Endothelial cell of umbilical vein (primary cell): ENCODE measurements at regions of chr12 and their contacts with region 1.

Region 1: DNA sequence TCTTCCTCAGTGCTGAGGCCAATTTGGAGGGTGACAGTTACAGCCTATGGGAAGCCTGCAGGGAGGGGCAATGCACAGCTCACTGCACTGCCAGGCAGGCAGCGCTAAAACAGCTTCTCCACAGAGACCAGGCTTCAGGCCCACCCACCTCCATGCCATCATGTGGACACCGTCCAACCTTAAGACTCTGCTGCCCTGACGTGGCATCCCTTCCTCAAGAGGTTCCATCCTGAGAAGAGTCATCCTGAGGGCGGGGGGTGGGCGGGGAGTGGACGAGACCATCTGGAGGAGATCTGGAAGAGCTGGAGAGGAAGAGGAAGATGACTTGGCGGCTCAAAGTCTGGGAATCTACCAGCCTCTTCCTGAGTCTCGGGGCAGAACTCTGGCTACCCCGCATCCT is 8.4 kb upstream of the ACVRL1 start:
- DNase-seq: peak; percentile 92
- H3K4me3 ChIP-seq: no peak overlapping the region
- H3K27ac ChIP-seq: peak overlapping the region; percentile 95
- H3K4me1 ChIP-seq: peaks cover 67% of the 10 kb centered on the region
- H3K27me3 ChIP-seq: no peaks in the 10 kb centered on the region
- CTCF ChIP-seq: no peak
- POLR2A ChIP-seq: peak; percentile 12

Region 2: DNA sequence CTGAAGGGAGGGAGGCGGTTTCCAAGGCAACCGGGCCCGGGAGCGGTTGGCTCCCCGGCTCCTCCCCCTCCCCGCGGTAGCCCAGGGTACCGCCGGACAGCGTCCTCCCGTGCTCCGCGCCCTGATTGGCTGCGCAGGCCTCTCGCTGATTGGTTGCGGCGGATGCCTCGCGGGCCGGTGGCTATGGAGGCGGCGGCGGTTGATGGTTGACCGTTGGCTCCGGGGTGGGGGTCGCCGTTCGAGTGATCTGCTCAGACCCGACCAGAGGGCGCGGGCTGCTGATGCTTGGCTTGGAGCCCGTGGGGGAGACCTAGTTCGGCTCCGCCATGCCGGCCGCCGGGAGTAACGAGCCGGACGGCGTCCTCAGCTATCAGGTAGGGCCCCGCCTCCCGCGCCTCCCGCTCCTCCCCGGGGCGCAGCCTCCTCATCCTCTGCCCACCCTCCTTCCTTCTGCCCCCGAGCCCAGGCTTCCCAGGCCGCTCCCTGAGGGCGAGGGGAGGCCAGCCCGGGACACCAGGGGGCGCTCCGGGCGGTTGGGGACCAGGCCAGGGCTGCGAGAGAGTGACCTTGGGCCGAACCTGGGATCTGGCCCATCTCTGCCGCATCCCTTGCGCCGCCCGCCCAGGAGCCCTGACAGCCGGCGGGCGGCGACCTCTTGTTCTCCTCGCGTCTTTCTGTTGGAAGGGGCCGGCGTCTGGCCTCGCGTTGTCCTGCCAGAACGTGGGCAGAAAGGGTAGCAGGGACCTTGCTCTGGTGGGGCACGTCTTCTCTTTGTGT is 474.1 kb before region 1 on chr12 and contains the start of gene SLC4A8:
- CTCF ChIA-PET with region 1: no interaction called
- POLR2A ChIA-PET with region 1: no interaction called
- dilution Hi-C with region 1: no loop called
- intact Hi-C with region 1: no loop called
- DNase-seq: peak; percentile 78
- H3K4me3 ChIP-seq: peak within 1 kb of the TSS; percentile 21 to 59 (median 33)
- H3K27ac ChIP-seq: no peak within 1 kb of the TSS
- H3K4me1 ChIP-seq: peaks cover 7% of the 10 kb centered on the region
- H3K27me3 ChIP-seq: no peaks in the 10 kb centered on the region
- CTCF ChIP-seq: peak; percentile 86 to 91
- POLR2A ChIP-seq: peak; percentile 37
- total RNA-seq, gene SLC4A8: 7.1 and 9.7 TPM in 2 replicates

Region 3: GRCh38 chr12:51886021-51886322 is 13.0 kb before region 1 on chr12:
- CTCF ChIA-PET with region 1: interaction called, 10 read pairs
- POLR2A ChIA-PET with region 1: interaction called, 5 read pairs
- dilution Hi-C with region 1: no loop called
- intact Hi-C with region 1: no loop called
- DNase-seq: peak; percentile 98
- H3K4me3 ChIP-seq: peak overlapping the region in 1 of 3 experiments; percentile 7
- H3K27ac ChIP-seq: peak overlapping the region; percentile 89
- H3K4me1 ChIP-seq: peaks cover 41% of the 10 kb centered on the region
- H3K27me3 ChIP-seq: no peaks in the 10 kb centered on the region
- CTCF ChIP-seq: no peak
- POLR2A ChIP-seq: peak; percentile 76

Region 4: GRCh38 chr12:51911788-51912711 is 13.1 kb after region 1 on chr12:
- CTCF ChIA-PET with region 1: interaction called, 393 read pairs
- POLR2A ChIA-PET with region 1: interaction called, 18 read pairs
- dilution Hi-C with region 1: no loop called
- intact Hi-C with region 1: loop called (anchors 1 kb)
- DNase-seq: peak; percentile 86
- H3K4me3 ChIP-seq: peak overlapping the region; percentile 5 to 57 (median 44)
- H3K27ac ChIP-seq: peak overlapping the region; percentile 99
- H3K4me1 ChIP-seq: peaks cover 59% of the 10 kb centered on the region
- H3K27me3 ChIP-seq: no peaks in the 10 kb centered on the region
- CTCF ChIP-seq: no peak
- POLR2A ChIP-seq: peak; percentile 10

Region 5: DNA sequence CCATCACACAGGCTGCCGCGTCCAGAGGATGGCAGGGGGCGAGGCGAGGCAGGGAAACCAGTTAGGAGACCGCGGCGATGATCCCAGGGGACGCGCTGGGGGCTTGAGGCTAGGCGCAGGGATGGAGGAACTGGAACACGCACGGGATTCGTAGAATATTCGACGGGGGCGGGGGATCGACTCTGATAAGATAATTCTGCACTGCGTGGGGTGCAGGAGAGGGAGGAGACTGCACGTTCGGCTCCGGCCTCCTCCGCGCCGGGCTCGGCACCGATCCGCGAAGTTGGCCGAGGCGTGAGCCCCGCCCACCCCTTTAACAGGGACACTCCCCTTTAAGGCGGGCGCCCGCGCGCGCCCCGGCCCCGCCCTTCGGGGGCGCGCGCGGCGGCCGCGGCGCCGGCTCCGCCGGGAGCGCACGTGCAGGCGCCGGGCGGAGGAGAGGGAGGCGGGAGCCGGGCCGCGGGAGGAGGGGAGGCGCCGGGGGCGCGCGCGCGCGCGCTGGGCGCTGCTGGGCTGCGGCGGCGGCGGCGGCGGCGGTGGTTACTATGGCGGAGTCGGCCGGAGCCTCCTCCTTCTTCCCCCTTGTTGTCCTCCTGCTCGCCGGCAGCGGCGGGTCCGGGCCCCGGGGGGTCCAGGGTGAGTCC is 52.4 kb after region 1 on chr12 and contains the start of gene ACVR1B:
- CTCF ChIA-PET with region 1: interaction called, 3 read pairs
- POLR2A ChIA-PET with region 1: interaction called, 10 read pairs
- dilution Hi-C with region 1: no loop called
- intact Hi-C with region 1: no loop called
- DNase-seq: peak; percentile 92
- H3K4me3 ChIP-seq: peak within 1 kb of the TSS; percentile 59 to 89 (median 73)
- H3K27ac ChIP-seq: peak within 1 kb of the TSS; percentile 58
- H3K4me1 ChIP-seq: peaks cover 28% of the 10 kb centered on the region
- H3K27me3 ChIP-seq: peaks cover 0 to 4% of the 10 kb centered on the region in 2 experiments
- CTCF ChIP-seq: no peak
- POLR2A ChIP-seq: peak; percentile 54
- total RNA-seq, gene ACVR1B: 25.4 and 33.7 TPM in 2 replicates

Region 6: GRCh38 chr12:51970904-51971646 is 72.1 kb after region 1 on chr12:
- CTCF ChIA-PET with region 1: interaction called, 6 read pairs
- POLR2A ChIA-PET with region 1: no interaction called
- dilution Hi-C with region 1: no loop called
- intact Hi-C with region 1: loop called (anchors 2 kb)
- DNase-seq: peak; percentile 89
- H3K4me3 ChIP-seq: peak overlapping the region in 1 of 3 experiments; percentile 3
- H3K27ac ChIP-seq: peak overlapping the region; percentile 98
- H3K4me1 ChIP-seq: peaks cover 70% of the 10 kb centered on the region
- H3K27me3 ChIP-seq: no peaks in the 10 kb centered on the region
- CTCF ChIP-seq: peak; percentile 82 to 85
- POLR2A ChIP-seq: no peak

Region 7: GRCh38 chr12:51980051-51980808 is 81.3 kb after region 1 on chr12:
- CTCF ChIA-PET with region 1: interaction called, 60 read pairs
- POLR2A ChIA-PET with region 1: interaction called, 5 read pairs
- dilution Hi-C with region 1: no loop called
- intact Hi-C with region 1: loop called (anchors 1 kb)
- DNase-seq: peak; percentile 84
- H3K4me3 ChIP-seq: no peak overlapping the region
- H3K27ac ChIP-seq: no peak overlapping the region
- H3K4me1 ChIP-seq: peaks cover 36% of the 10 kb centered on the region
- H3K27me3 ChIP-seq: no peaks in the 10 kb centered on the region
- CTCF ChIP-seq: peak; percentile 90 to 97
- POLR2A ChIP-seq: no peak

Region 8: DNA sequence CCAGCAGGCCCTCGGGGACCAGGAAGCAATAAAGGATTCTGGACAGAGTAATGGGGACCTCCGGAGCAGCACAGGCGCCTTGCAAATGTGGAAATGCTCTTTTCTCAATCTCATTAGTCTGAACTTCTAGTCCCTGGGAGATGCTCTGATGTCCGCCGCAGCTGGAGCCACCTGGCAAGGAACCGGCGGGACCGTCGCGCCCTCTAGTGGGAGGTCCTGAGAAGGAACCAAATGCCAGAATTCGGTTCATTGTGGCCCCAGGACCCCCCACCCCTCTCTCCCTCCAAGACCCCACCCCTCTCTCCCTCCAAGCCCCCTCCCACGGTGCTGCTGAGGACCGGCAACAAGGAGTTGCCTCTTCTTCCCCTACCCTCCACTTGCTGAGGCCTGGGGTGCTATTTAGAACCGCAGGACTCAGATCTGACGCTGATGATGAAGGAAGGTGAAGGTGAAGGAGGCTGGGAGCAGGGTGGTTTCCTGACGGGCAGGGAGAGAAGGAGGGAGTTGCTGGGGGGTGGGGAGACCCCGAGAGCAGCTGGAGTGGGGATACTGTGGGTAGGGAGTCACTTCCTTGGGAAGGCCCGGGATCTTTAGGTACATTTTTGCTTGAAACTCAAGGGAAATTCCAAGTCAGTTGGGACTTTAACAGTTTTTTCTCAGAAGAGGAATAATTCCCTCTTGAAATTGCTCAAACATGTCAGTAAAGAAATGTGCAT is 223.0 kb after region 1 on chr12:
- CTCF ChIA-PET with region 1: no interaction called
- POLR2A ChIA-PET with region 1: no interaction called
- dilution Hi-C with region 1: no loop called
- intact Hi-C with region 1: no loop called
- DNase-seq: peak; percentile 33
- H3K4me3 ChIP-seq: no peak overlapping the region
- H3K27ac ChIP-seq: no peak overlapping the region
- H3K4me1 ChIP-seq: peaks cover 21% of the 10 kb centered on the region
- H3K27me3 ChIP-seq: peaks cover 0 to 1% of the 10 kb centered on the region in 2 experiments
- CTCF ChIP-seq: peak; percentile 58 to 87
- POLR2A ChIP-seq: no peak